Activated CD4-positive, alpha-beta memory T cell treated with anti-CD3 and anti-CD28 coated beads for 36 hours (primary cell): ENCODE measurements at regions of chr1 and their contacts with region 1.

Region 1: GRCh38 chr1:37434292-37434907 is 40.0 kb upstream of the ZC3H12A start:
- DNase-seq: peak; percentile 79
- H3K4me3 Mint-ChIP-seq: no peak overlapping the region
- H3K27ac Mint-ChIP-seq: no peak overlapping the region
- H3K4me1 Mint-ChIP-seq: no peaks in the 10 kb centered on the region
- H3K27me3 Mint-ChIP-seq: peaks cover 13% of the 10 kb centered on the region

Region 2: DNA sequence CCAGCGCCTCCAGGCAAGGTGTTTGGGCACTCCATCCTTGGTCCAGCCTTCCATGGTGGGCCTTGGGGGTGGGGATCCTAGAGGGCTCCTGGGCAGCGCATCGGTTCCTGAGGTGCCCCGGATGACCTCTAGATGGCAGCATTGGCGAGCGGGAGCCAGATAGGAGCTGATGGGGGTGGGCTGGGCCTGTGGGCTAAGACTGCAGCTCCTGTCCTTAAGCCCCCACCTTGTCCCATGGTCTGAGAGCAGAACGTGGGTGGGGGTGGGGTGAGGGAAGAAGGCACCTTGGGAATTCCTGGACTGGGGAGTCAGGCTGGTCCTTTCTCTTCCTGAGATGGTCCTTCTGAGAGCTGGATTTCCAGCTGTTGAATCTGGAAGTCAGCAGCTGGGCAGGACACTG is 858.3 kb before region 1 on chr1:
- CTCF ChIA-PET with region 1: interaction called, 14 read pairs
- POLR2A ChIA-PET with region 1: no interaction called
- intact Hi-C with region 1: no loop called
- DNase-seq: peak; percentile 65
- H3K4me3 Mint-ChIP-seq: no peak overlapping the region
- H3K27ac Mint-ChIP-seq: no peak overlapping the region
- H3K4me1 Mint-ChIP-seq: no peaks in the 10 kb centered on the region
- H3K27me3 Mint-ChIP-seq: peaks cover 24% of the 10 kb centered on the region

Region 3: DNA sequence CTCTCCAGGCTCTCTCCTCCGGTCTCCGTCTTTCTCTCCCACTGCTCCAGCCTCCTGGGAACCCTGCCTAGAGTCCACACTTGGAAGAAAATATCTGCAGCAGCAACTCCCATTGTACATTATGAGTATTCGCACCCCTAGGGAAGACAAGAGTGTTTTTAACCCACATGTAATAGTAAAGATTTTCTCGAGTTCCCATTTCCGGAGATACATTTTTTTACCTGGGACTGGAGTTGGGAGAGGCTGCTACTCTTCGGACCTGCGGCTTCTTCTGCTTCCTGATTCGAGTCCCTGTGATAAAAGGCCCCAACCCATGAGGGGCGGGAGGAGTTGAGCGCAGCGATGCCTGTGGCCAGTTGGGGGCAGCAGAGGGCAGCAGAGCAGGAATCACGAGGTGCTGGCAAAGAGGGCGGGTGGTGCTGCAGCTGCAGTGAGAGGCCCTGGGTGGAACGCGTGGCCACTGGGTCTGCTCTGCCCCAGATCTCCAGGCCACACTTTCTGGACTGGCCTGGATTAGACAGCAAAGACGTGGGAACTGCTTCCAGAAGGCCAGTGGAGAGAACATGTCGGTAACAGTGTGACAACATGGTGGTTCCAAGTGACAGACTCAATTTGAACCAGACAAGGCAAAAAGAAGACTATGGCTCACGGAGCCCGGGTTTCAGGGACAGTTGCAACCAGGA is 730.7 kb before region 1 on chr1:
- CTCF ChIA-PET with region 1: interaction called, 4 read pairs
- POLR2A ChIA-PET with region 1: no interaction called
- intact Hi-C with region 1: loop called (anchors 5 kb)
- DNase-seq: peak; percentile 81
- H3K4me3 Mint-ChIP-seq: no peak overlapping the region
- H3K27ac Mint-ChIP-seq: no peak overlapping the region
- H3K4me1 Mint-ChIP-seq: peaks cover 4% of the 10 kb centered on the region
- H3K27me3 Mint-ChIP-seq: peaks cover 17% of the 10 kb centered on the region

Region 4: GRCh38 chr1:37255136-37255795 is 179.1 kb before region 1 on chr1:
- CTCF ChIA-PET with region 1: no interaction called
- POLR2A ChIA-PET with region 1: no interaction called
- intact Hi-C with region 1: no loop called
- DNase-seq: peak; percentile 34
- H3K4me3 Mint-ChIP-seq: no peak overlapping the region
- H3K27ac Mint-ChIP-seq: no peak overlapping the region
- H3K4me1 Mint-ChIP-seq: no peaks in the 10 kb centered on the region
- H3K27me3 Mint-ChIP-seq: peaks cover 25% of the 10 kb centered on the region

Region 5: GRCh38 chr1:37393173-37394120 is 41.0 kb before region 1 on chr1:
- CTCF ChIA-PET with region 1: interaction called, 11 read pairs
- POLR2A ChIA-PET with region 1: no interaction called
- intact Hi-C with region 1: no loop called
- DNase-seq: no peak
- H3K4me3 Mint-ChIP-seq: no peak overlapping the region
- H3K27ac Mint-ChIP-seq: no peak overlapping the region
- H3K4me1 Mint-ChIP-seq: no peaks in the 10 kb centered on the region
- H3K27me3 Mint-ChIP-seq: peaks cover 26% of the 10 kb centered on the region